Activated T-helper 1 cell treated with anti-CD3 and anti-CD28 coated beads, Interleukin-12 subunit alpha, Interleukin-12 subunit beta, Interleukin-2, Interleukin-4 antibody, amounts not matched to agents 30 ng/mL and 10 ng/mL and 1 ng/mL, durations not matched to agents 14 hours and 24 hours and 36 hours (primary cell): ENCODE measurements at regions of chr4 and their contacts with region 1.

Region 1: GRCh38 chr4:98995183-98996055 is at the start of gene METAP1:
- DNase-seq: peak; percentile 94
- H3K4me3 Mint-ChIP-seq: peak within 1 kb of the TSS; percentile 91
- H3K27ac Mint-ChIP-seq: peak within 1 kb of the TSS; percentile 99
- H3K4me1 Mint-ChIP-seq: peaks cover 33% of the 10 kb centered on the region
- H3K27me3 Mint-ChIP-seq: no peaks in the 10 kb centered on the region
- total RNA-seq, gene METAP1: 58.1 and 61.3 TPM in 2 replicates

Region 2: DNA sequence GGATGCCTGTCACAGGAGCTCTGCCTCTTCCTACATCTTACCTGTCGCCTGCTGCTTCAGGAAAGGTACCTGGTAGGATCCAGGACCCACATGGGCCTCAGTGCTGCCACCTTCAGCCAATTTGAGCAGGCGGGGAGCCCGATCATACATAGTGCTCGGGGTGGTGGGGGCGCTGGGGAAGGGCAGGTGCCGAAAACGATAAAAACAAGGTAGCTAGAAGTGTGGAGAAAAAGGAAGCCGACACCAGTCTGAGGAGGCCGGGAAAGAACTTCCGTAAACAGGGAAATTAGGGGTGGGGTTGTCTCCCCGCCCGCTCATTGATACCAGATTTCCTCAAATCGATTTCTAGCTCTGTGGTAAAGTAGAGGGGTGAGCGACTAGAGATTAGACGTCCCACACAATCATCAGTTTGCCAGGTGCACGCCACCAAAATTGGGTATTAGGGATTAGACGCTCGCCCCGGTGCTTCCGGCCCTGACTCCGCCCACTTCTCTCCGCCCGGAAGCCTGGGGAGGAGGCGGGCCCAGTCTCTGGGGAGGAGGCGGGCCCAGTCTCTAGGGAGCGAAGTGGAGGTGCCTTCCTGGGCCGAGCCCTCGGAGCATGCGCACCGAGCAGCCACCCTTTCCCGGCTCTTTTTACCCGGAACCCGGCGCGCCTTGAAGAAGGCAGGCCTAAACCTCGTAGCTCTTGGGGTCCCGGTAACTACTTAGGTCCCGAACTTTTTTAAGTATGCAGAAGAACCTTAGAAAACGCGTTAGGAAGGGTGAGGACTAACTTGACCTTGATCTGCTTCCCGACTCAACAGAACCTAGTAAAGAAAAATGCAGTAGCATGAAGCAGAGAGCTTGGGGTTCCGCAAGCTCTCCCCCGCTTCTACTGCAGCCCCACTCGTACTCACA is 852.2 kb before region 1 on chr4 and contains the start of gene STPG2:
- intact Hi-C with region 1: loop called (anchors 1 kb)
- DNase-seq: peak; percentile 91
- H3K4me3 Mint-ChIP-seq: peak within 1 kb of the TSS; percentile 88
- H3K27ac Mint-ChIP-seq: peak within 1 kb of the TSS; percentile 93
- H3K4me1 Mint-ChIP-seq: peaks cover 18% of the 10 kb centered on the region
- H3K27me3 Mint-ChIP-seq: peaks cover 7% of the 10 kb centered on the region
- total RNA-seq, gene STPG2: not detected in 2 replicates

Region 3: GRCh38 chr4:98467627-98468072 is 527.8 kb before region 1 on chr4:
- intact Hi-C with region 1: loop called (anchors 1 kb)
- DNase-seq: peak; percentile 63
- H3K4me3 Mint-ChIP-seq: peak overlapping the region; percentile 69
- H3K27ac Mint-ChIP-seq: peak overlapping the region; percentile 29
- H3K4me1 Mint-ChIP-seq: peaks cover 54% of the 10 kb centered on the region
- H3K27me3 Mint-ChIP-seq: no peaks in the 10 kb centered on the region

Region 4: DNA sequence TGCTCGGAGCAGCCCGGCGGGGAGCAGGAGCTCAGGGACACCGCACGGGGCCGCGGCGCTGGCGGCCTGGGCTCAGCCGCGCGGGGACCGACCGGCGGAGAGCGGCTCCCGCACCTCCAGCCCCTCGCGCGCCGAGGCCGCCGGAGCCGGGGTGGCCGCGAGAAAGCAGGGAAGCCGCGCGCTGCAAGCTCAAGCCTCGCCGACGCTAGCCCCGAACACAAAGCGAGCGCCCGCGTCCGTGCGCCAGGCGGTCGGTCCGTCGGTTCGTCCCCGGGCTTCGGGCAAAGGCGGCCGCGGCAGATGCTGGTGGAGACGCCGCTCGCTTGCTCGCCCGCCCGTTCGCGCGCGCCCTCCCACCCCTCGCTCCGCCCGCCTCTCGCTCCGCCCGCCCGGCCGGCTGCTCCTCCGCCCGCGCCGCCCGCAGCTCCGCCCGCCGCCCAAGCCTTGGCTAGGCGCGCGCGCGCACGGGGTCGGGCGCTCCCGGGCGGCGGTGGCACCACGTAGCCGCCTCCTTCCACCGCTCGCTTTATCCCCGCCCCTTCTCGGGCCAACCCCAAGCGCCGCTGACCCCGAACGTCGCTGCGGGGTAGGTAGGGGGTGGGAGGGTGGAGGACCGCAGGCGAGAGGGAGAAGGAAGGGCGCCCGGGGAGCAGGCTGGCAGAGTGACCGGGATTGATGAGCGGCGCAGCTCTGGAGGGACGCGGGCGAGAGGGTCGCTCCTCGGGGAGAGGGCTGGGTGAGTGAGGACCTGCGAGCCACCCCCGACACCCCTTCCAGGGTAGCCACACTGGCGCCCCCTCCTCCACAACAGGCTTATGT is 336.9 kb before region 1 on chr4 and contains the start of gene TSPAN5:
- intact Hi-C with region 1: loop called (anchors 1 kb)
- DNase-seq: peak; percentile 80
- H3K4me3 Mint-ChIP-seq: peak within 1 kb of the TSS; percentile 96
- H3K27ac Mint-ChIP-seq: peak within 1 kb of the TSS; percentile 95
- H3K4me1 Mint-ChIP-seq: peaks cover 82% of the 10 kb centered on the region
- H3K27me3 Mint-ChIP-seq: no peaks in the 10 kb centered on the region
- total RNA-seq, gene TSPAN5: 34.1 and 35.5 TPM in 2 replicates

Region 5: DNA sequence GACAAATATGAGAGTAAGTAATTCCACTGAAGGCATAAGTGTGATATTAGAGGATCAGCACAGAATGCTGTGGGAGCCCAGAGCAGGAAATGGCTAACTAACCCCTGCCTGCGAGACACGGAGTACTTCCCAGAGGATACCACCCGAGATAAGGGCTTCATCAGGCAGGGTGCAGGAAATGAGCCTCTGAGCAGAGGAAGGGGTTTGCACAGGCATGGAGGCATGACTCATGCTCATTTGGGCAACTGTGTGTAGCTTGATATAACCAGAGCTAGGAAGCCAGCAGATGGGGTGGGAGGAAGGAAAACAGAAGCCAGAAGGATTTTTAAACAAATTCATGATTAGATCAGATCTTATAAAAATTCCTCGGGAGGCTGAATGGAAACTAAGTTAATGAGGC is 267.0 kb before region 1 on chr4:
- intact Hi-C with region 1: no loop called
- DNase-seq: no peak
- H3K4me3 Mint-ChIP-seq: no peak overlapping the region
- H3K27ac Mint-ChIP-seq: no peak overlapping the region
- H3K4me1 Mint-ChIP-seq: peaks cover 7% of the 10 kb centered on the region
- H3K27me3 Mint-ChIP-seq: no peaks in the 10 kb centered on the region

Region 6: DNA sequence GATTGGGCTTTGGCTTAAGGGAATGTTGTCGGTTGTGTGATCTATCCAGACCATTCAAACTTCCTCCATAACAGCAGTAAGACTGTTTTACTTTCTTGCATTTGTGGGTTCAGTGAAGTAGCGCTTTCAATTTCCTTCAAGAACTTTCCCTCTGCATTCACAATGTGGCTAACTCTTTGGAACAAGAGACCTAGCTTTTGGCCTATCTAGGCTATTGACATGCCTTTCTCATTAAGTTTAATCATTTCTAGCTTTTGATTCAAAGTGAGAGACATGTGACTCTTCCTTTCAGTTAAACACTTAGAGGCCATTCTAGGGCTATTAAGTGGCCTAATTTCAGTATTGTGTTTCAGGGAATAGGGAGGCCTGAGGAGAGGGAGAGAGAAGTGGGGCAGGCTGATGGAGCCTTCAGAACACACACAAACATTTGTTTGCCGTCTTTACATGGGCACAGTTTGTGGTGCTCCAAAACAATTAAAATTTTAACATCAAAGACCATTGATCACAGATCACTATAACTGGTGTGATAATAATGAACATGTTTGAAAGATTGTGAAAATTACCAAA is 59.1 kb after region 1 on chr4:
- intact Hi-C with region 1: loop called (anchors 1 kb)
- DNase-seq: no peak
- H3K4me3 Mint-ChIP-seq: no peak overlapping the region
- H3K27ac Mint-ChIP-seq: peak overlapping the region; percentile 7
- H3K4me1 Mint-ChIP-seq: peaks cover 49% of the 10 kb centered on the region
- H3K27me3 Mint-ChIP-seq: no peaks in the 10 kb centered on the region

Region 7: GRCh38 chr4:99356992-99357391 is 361.6 kb after region 1 on chr4:
- intact Hi-C with region 1: no loop called
- DNase-seq: no peak
- H3K4me3 Mint-ChIP-seq: no peak overlapping the region
- H3K27ac Mint-ChIP-seq: no peak overlapping the region
- H3K4me1 Mint-ChIP-seq: no peaks in the 10 kb centered on the region
- H3K27me3 Mint-ChIP-seq: peaks cover 3% of the 10 kb centered on the region

Region 8: GRCh38 chr4:99563310-99564186 is 568.1 kb after region 1 on chr4 and contains the start of gene TRMT10A:
- intact Hi-C with region 1: loop called (anchors 1 kb)
- DNase-seq: peak; percentile 92
- H3K4me3 Mint-ChIP-seq: peak within 1 kb of the TSS; percentile 89
- H3K27ac Mint-ChIP-seq: peak within 1 kb of the TSS; percentile 96
- H3K4me1 Mint-ChIP-seq: peaks cover 25% of the 10 kb centered on the region
- H3K27me3 Mint-ChIP-seq: peaks cover 11% of the 10 kb centered on the region
- total RNA-seq, gene TRMT10A: 7.3 TPM in 2 replicates